ENCODE measurements at regions of chr4 and their contacts with region 1.

Region 1: DNA sequence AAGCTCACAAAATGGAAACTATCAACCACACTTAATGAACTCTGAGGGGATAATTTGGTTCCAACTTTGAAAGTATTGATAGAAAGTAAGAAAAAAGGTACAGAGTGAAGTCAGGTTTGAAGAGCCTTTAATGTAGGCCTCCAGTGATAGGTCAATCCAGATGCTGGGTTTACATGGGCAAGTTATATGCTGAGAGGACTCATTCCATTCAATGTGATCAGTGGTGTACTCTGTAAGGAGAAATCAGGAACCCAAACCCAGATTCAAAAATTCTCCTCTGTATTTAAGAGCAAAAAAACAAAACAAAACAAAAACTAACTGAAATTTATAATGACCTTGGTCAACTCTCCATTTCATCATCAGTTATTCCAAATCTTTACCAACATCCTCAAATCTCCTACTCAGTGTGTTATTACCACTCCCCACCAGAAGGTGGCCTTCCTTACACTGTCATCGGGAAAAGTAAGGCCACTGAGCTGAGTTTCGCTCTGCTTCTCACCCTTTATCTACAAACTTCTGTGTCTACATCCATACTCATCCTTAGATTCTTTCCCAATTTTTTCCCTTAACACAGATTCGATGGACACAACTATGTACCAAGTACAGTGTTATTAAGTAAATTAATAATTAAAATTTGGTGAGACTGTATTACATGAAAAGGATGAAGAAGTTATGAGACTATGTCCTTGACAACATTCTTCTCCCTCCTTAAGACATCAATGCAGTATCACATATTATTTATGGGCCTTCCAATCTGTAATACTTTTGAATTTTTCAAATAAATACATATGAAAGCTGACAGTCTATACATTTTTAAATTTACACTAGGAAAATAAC is 88.3 kb downstream of the ZAR1 start:
- DNase-seq: peak; percentile 32
- ATAC-seq: peak; percentile 87 to 92

Region 2: GRCh38 chr4:48410812-48411211 is 167.5 kb before region 1 on chr4:
- intact Hi-C with region 1: no loop called
- DNase-seq: no peak
- ATAC-seq: no peak

Region 3: DNA sequence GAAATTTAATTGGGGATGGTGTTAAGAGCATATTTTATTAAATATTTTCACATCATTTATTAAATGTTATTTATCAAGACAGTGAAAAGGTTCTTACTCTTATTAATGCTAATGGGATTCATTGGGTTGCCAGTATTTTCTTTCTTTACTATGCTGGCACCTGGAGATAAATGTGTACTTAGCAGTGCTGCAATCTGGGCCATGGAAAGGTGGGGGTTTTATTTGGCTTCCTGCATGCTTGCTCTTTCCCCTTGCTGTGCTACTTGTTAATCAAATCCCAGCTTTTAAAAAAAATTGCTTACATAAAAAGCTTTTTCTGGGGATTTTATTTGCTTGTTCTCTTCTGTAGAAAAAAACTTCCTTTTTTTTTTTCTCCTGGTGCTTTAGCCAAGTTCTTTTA is 40.0 kb before region 1 on chr4:
- intact Hi-C with region 1: no loop called
- DNase-seq: no peak
- ATAC-seq: no peak

Region 4: DNA sequence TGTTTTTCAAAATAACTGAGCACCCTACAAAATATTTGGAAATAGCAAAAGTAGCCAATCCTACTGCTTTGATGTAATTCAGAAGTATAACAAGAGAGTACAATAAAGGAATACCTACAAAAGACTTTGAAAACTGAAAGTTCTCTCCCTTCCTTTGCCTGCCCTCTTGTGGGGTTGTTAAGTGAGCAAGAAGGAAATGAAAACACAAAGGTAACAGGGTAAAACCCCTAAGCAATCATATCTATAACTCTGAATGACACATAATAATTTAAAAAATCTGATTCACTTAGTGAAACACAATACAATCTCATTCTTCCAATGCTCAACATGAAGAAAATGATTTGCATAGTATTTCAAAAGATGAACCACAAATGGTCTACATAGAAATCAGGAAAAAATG is 103.5 kb after region 1 on chr4:
- intact Hi-C with region 1: loop called in 1 of 2 experiments (anchors 5 kb)
- DNase-seq: no peak
- ATAC-seq: peak in 1 of 2 donors; percentile 44

Region 5: DNA sequence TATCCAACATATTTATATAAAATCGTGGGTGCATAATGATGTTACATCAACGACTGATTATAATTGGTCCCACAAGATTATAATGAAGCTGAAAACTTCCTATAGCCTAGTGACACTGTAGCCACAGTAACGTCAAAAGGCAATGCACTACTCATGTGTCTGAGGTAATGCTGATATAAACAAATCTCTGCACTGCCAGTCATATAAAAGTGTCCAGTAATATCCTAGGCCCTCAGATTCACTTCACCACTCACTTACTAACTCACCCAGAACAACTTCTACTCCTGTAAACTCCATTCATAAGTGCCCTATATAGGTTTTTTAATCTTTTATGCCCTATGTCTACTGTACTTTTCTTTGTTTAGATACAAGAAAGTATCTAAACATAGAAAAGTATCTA is 182.9 kb after region 1 on chr4:
- intact Hi-C with region 1: no loop called
- DNase-seq: no peak
- ATAC-seq: no peak

Region 6: GRCh38 chr4:48963042-48963679 is 384.8 kb after region 1 on chr4:
- intact Hi-C with region 1: loop called (anchors 2 to 10 kb)
- DNase-seq: peak; percentile 72
- ATAC-seq: peak; percentile 70 to 86

Measured in left cardiac atrium (tissue), 4 donors.